ENCODE measurements at regions of chr11 and their contacts with region 1.

Region 1: DNA sequence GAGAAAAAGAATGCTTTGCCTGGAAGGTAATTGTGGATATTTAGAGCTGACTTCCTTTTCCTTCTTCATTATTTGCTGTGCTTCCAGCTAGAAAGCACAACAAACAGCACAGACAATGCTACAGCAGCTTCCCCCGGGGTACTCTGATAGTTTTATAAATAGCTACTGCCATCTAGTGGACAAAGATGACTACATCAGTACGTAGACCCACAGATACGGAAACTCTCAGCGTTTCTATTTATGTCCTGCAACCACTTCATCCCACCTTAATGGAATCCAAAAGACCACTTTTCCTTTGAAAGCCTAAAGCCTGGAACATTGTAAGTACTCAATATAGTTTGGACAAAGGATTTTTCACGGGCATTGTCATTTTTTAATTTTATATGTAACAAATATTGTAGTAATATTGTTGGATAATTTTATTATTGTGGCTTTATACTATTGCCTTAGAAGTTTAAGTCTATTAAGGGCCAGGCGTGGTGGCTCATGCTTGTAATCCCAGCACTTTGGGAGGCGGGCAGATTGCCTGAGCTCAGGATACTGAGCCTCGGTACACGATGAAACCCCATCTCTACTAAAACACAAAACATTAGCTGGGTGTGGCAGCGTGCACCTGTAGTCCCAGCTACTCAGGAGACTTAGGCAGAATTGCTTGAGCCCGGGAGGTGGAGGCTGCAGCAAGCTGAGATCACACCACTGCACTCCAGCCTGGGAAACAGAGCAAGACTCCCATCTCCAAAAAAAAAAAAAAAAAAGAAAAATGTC is 7.5 kb downstream of the HSPA8 start:
- DNase-seq: peak in 4 of 9 experiments; percentile 28 to 84 (median 56)
- ATAC-seq: peak; percentile 85
- H3K4me3 ChIP-seq: no peak overlapping the region
- H3K4me3 Mint-ChIP-seq: peak overlapping the region; percentile 67
- H3K27ac ChIP-seq: peak overlapping the region in 1 of 2 experiments; percentile 51
- H3K27ac Mint-ChIP-seq: peak overlapping the region; percentile 97
- H3K4me1 ChIP-seq: peaks cover 55% of the 10 kb centered on the region
- H3K4me1 Mint-ChIP-seq: peaks cover 57% of the 10 kb centered on the region
- H3K27me3 ChIP-seq: no peaks in the 10 kb centered on the region
- H3K27me3 Mint-ChIP-seq: no peaks in the 10 kb centered on the region
- CTCF ChIP-seq: peak; percentile 72

Region 2: DNA sequence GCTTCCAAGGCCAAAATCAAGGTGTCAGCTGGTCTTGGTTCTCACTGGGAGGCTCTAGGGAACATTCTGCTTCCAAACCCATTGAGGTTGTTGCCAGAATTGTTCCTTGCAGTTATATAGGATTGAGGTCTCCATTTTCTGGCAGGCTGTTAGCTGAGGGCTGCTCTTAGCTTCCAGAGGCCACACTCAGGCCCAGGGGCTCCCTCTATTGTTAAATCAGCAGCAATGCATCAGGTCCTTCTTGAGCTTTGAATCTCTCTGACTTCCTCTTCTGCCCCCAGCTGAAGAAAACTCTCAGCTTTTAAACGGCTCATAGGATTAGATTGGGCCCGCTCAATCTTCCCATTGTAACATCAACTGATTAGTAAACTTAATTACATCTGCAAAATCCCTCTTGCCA is 33.5 kb before region 1 on chr11:
- CTCF ChIA-PET with region 1: interaction called, 52 read pairs
- POLR2A ChIA-PET with region 1: interaction called, 6 read pairs
- intact Hi-C with region 1: loop called in 1 of 2 experiments (anchors 1 kb)
- DNase-seq: peak in 5 of 9 experiments; percentile 5 to 61 (median 20)
- ATAC-seq: peak; percentile 77
- H3K4me3 ChIP-seq: no peak overlapping the region
- H3K4me3 Mint-ChIP-seq: no peak overlapping the region
- H3K27ac ChIP-seq: no peak overlapping the region
- H3K27ac Mint-ChIP-seq: no peak overlapping the region
- H3K4me1 ChIP-seq: no peaks in the 10 kb centered on the region
- H3K4me1 Mint-ChIP-seq: peaks cover 7% of the 10 kb centered on the region
- H3K27me3 ChIP-seq: peaks cover 0 to 2% of the 10 kb centered on the region in 2 experiments
- H3K27me3 Mint-ChIP-seq: peaks cover 2% of the 10 kb centered on the region
- CTCF ChIP-seq: peak; percentile 55

Region 3: DNA sequence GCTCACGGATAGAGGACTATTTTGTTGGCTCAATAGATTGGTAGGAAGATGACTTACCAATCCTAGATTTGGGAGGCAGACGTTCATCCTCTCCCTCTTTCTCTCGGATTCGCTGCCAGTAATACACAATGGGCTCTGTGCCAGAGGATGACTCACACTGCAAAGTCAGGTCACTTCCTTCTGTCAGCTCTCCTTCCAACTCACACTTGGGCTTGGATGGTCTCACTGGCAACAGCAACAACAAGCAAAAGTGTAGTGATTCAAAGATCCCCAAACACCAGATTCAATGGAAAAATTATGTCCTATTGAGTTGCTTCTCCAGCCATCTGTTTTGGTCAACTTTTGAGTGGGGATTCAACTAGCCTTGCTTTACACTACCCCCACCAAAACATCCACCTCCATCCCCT is 29.1 kb after region 1 on chr11:
- CTCF ChIA-PET with region 1: interaction called, 14 read pairs
- POLR2A ChIA-PET with region 1: interaction called, 65 read pairs
- intact Hi-C with region 1: loop called in 1 of 2 experiments (anchors 5 kb)
- DNase-seq: peak in 8 of 9 experiments; percentile 45 to 82 (median 69)
- ATAC-seq: no peak
- H3K4me3 ChIP-seq: no peak overlapping the region
- H3K4me3 Mint-ChIP-seq: peak overlapping the region; percentile 20
- H3K27ac ChIP-seq: peak overlapping the region in 1 of 2 experiments; percentile 42
- H3K27ac Mint-ChIP-seq: peak overlapping the region; percentile 45
- H3K4me1 ChIP-seq: peaks cover 33% of the 10 kb centered on the region
- H3K4me1 Mint-ChIP-seq: peaks cover 44% of the 10 kb centered on the region
- H3K27me3 ChIP-seq: no peaks in the 10 kb centered on the region
- H3K27me3 Mint-ChIP-seq: no peaks in the 10 kb centered on the region
- CTCF ChIP-seq: no peak

Region 4: DNA sequence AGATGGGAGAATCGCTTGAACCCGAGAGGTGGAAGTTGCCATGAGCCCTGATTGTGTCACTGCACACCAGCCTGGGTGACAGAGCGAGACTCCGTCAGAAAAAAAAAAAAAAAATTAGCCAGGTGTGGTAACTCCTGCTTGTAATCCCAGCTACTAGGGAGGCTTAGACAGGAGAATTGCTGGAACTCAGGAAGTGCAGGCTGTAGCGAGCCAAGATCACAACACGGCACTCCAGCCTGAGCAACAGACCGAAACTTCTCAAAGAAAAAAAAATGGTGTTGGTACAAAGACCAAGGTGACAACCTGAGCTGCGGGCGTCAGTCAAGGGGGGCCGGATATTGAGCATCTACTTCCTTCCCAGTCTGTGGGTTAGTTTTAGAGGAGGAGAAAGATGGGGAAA is 55.9 kb after region 1 on chr11:
- CTCF ChIA-PET with region 1: interaction called, 123 read pairs
- POLR2A ChIA-PET with region 1: interaction called, 3 read pairs
- intact Hi-C with region 1: no loop called
- DNase-seq: peak in 2 of 9 experiments; percentile 22 to 41
- ATAC-seq: no peak
- H3K4me3 ChIP-seq: no peak overlapping the region
- H3K4me3 Mint-ChIP-seq: peak overlapping the region; percentile 62
- H3K27ac ChIP-seq: no peak overlapping the region
- H3K27ac Mint-ChIP-seq: peak overlapping the region; percentile 71
- H3K4me1 ChIP-seq: no peaks in the 10 kb centered on the region
- H3K4me1 Mint-ChIP-seq: peaks cover 4% of the 10 kb centered on the region
- H3K27me3 ChIP-seq: no peaks in the 10 kb centered on the region
- H3K27me3 Mint-ChIP-seq: no peaks in the 10 kb centered on the region
- CTCF ChIP-seq: no peak

Region 5: GRCh38 chr11:123129920-123130319 is 75.4 kb after region 1 on chr11:
- CTCF ChIA-PET with region 1: no interaction called
- POLR2A ChIA-PET with region 1: no interaction called
- intact Hi-C with region 1: no loop called
- DNase-seq: no peak
- ATAC-seq: no peak
- H3K4me3 ChIP-seq: no peak overlapping the region
- H3K4me3 Mint-ChIP-seq: no peak overlapping the region
- H3K27ac ChIP-seq: no peak overlapping the region
- H3K27ac Mint-ChIP-seq: no peak overlapping the region
- H3K4me1 ChIP-seq: no peaks in the 10 kb centered on the region
- H3K4me1 Mint-ChIP-seq: no peaks in the 10 kb centered on the region
- H3K27me3 ChIP-seq: no peaks in the 10 kb centered on the region
- H3K27me3 Mint-ChIP-seq: no peaks in the 10 kb centered on the region
- CTCF ChIP-seq: no peak

Region 6: GRCh38 chr11:123166071-123166559 is 111.6 kb after region 1 on chr11:
- CTCF ChIA-PET with region 1: no interaction called
- POLR2A ChIA-PET with region 1: no interaction called
- intact Hi-C with region 1: no loop called
- DNase-seq: peak in 2 of 9 experiments; percentile 5 to 9
- ATAC-seq: no peak
- H3K4me3 ChIP-seq: no peak overlapping the region
- H3K4me3 Mint-ChIP-seq: no peak overlapping the region
- H3K27ac ChIP-seq: no peak overlapping the region
- H3K27ac Mint-ChIP-seq: no peak overlapping the region
- H3K4me1 ChIP-seq: no peaks in the 10 kb centered on the region
- H3K4me1 Mint-ChIP-seq: no peaks in the 10 kb centered on the region
- H3K27me3 ChIP-seq: no peaks in the 10 kb centered on the region
- H3K27me3 Mint-ChIP-seq: no peaks in the 10 kb centered on the region
- CTCF ChIP-seq: no peak

Region 7: GRCh38 chr11:123261345-123262106 is 207.0 kb after region 1 on chr11:
- CTCF ChIA-PET with region 1: interaction called, 10 read pairs
- POLR2A ChIA-PET with region 1: no interaction called
- intact Hi-C with region 1: no loop called
- DNase-seq: peak; percentile 16 to 70 (median 61)
- ATAC-seq: peak; percentile 75
- H3K4me3 ChIP-seq: no peak overlapping the region
- H3K4me3 Mint-ChIP-seq: peak overlapping the region; percentile 43
- H3K27ac ChIP-seq: no peak overlapping the region
- H3K27ac Mint-ChIP-seq: no peak overlapping the region
- H3K4me1 ChIP-seq: peaks cover 4% of the 10 kb centered on the region
- H3K4me1 Mint-ChIP-seq: peaks cover 5% of the 10 kb centered on the region
- H3K27me3 ChIP-seq: peaks cover 0 to 2% of the 10 kb centered on the region in 2 experiments
- H3K27me3 Mint-ChIP-seq: peaks cover 23% of the 10 kb centered on the region
- CTCF ChIP-seq: peak; percentile 63

Region 8: DNA sequence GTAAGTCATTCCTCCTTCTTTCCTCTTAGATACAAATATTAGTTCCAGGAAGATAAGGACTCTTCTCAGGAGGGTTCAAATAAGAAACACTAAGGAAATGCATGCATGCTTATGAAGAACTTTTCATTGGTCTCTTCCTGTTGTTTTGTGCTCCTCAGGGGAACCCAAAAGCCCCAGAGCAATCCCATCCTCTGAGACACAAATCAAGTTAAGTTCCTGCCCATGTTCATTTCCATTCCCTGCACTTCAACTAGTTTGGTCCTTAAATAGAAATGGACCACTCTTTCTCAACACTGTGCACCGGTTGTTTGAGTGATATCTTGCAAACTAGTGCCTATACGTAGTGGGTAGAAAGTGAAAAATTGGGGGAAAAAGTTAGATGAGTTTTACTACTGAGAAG is 958.2 kb after region 1 on chr11 and contains the start of gene OR10G4:
- CTCF ChIA-PET with region 1: no interaction called
- POLR2A ChIA-PET with region 1: no interaction called
- intact Hi-C with region 1: no loop called
- DNase-seq: no peak
- ATAC-seq: no peak
- H3K4me3 ChIP-seq: no peak within 1 kb of the TSS
- H3K4me3 Mint-ChIP-seq: no peak within 1 kb of the TSS
- H3K27ac ChIP-seq: no peak within 1 kb of the TSS
- H3K27ac Mint-ChIP-seq: no peak within 1 kb of the TSS
- H3K4me1 ChIP-seq: no peaks in the 10 kb centered on the region
- H3K4me1 Mint-ChIP-seq: no peaks in the 10 kb centered on the region
- H3K27me3 ChIP-seq: no peaks in the 10 kb centered on the region
- H3K27me3 Mint-ChIP-seq: no peaks in the 10 kb centered on the region
- CTCF ChIP-seq: no peak
- total RNA-seq, gene OR10G4: not detected

Measured in CD8-positive, alpha-beta T cell (primary cell).